ENCODE measurements at regions of chr16 and their contacts with region 1.

Region 1: GRCh38 chr16:88737298-88738150 is 31.2 kb downstream of the CTU2 start:
- DNase-seq: peak; percentile 79
- H3K4me3 Mint-ChIP-seq: no peak overlapping the region
- H3K27ac Mint-ChIP-seq: no peak overlapping the region
- H3K4me1 Mint-ChIP-seq: peaks cover 3% of the 10 kb centered on the region
- H3K27me3 Mint-ChIP-seq: no peaks in the 10 kb centered on the region

Region 2: GRCh38 chr16:88790312-88791211 is 53.0 kb after region 1 on chr16:
- CTCF ChIA-PET with region 1: interaction called, 28 read pairs
- intact Hi-C with region 1: loop called (anchors 1 kb)
- DNase-seq: peak; percentile 80
- H3K4me3 Mint-ChIP-seq: peak overlapping the region; percentile 66
- H3K27ac Mint-ChIP-seq: peak overlapping the region; percentile 79
- H3K4me1 Mint-ChIP-seq: peaks cover 49% of the 10 kb centered on the region
- H3K27me3 Mint-ChIP-seq: no peaks in the 10 kb centered on the region

Measured in activated naive CD4-positive, alpha-beta T cell treated with anti-CD3 and anti-CD28 coated beads for 36 hours (primary cell).